ENCODE measurements at regions of chr2 and their contacts with region 1.

Region 1: DNA sequence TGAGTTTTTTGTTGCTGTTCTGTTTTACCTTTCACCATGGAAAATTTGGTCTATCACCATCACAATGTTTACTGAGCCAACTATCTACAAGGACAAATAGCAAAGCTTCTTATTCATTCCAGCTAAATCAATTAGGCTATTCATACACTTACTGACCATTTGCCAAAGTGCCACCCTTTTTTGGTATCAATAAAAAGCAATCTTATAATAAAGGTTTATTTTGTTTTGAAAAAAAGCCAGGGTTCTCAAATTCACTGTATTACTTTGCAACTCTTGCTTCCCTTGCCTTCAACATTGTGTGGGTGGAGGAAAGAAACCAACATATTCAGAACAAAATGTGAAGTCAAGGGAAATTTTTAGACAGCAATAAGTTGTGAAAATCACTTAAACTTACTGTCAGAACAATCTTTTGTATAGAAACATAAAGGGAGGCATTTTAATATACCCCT is 15.3 kb downstream of the PELI1 start:
- DNase-seq: no peak
- H3K4me3 ChIP-seq: no peak overlapping the region
- H3K27ac ChIP-seq: no peak overlapping the region
- H3K4me1 ChIP-seq: peaks cover 2% of the 10 kb centered on the region
- H3K27me3 ChIP-seq: no peaks in the 10 kb centered on the region
- CTCF ChIP-seq: no peak
- POLR2A ChIP-seq: no peak

Region 2: GRCh38 chr2:63881205-63881604 is 247.8 kb before region 1 on chr2:
- CTCF ChIA-PET with region 1: no interaction called
- POLR2A ChIA-PET with region 1: no interaction called
- dilution Hi-C with region 1: no loop called
- intact Hi-C with region 1: loop called (anchors 5 kb)
- DNase-seq: no peak
- H3K4me3 ChIP-seq: no peak overlapping the region
- H3K27ac ChIP-seq: no peak overlapping the region
- H3K4me1 ChIP-seq: no peaks in the 10 kb centered on the region
- H3K27me3 ChIP-seq: no peaks in the 10 kb centered on the region
- CTCF ChIP-seq: no peak
- POLR2A ChIP-seq: no peak

Region 3: DNA sequence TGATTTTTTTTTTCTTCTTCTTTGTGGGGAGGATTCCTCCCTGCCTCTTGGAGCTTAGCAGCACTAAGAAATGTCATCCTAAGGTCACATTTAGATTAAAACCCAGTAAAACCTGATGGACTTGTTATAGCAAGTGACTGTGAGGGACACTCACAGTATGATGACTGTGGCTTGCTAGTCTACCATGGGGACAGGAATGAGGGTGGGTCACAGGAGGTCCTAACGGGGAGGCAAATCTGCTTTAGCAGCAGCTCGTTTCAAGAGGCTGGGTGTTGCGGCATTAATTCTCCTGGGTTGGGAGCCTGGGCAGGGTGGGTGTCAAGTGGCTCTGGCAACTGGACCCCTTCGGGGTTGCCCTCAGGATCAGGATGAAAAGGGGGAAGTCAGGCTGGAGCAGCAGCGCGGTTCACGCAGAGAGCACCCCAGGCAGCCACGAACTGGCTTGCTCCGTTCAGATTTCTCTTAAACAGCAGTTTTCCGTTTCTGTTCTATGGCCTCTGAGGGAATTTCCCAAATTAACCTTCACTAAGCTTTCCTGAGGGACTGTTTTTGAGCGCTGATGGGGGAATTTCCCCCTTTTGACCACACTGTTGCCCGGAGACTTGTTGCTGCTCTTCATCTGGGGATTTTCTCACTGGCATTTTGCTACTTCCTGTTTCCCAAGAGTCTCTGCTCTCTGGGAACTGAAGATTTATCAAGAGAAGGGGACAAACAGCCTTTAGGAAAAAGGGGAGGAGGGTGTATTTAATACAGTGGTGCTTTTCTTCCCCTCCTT is 75.1 kb after region 1 on chr2:
- CTCF ChIA-PET with region 1: no interaction called
- POLR2A ChIA-PET with region 1: no interaction called
- dilution Hi-C with region 1: no loop called
- intact Hi-C with region 1: no loop called
- DNase-seq: peak; percentile 62
- H3K4me3 ChIP-seq: no peak overlapping the region
- H3K27ac ChIP-seq: no peak overlapping the region
- H3K4me1 ChIP-seq: no peaks in the 10 kb centered on the region
- H3K27me3 ChIP-seq: no peaks in the 10 kb centered on the region
- CTCF ChIP-seq: no peak
- POLR2A ChIP-seq: no peak